Endothelial cell of umbilical vein (primary cell): ENCODE measurements at regions of chr9 and their contacts with region 1.

Region 1: GRCh38 chr9:113501129-113501686 is 37.7 kb downstream of the RGS3 start:
- DNase-seq: peak; percentile 98
- H3K4me3 ChIP-seq: peak overlapping the region; percentile 94 to 99 (median 94)
- H3K27ac ChIP-seq: peak overlapping the region; percentile 100
- H3K4me1 ChIP-seq: peaks cover 34% of the 10 kb centered on the region
- H3K27me3 ChIP-seq: no peaks in the 10 kb centered on the region
- CTCF ChIP-seq: peak in 1 of 2 donors; percentile 22
- POLR2A ChIP-seq: peak; percentile 88

Region 2: DNA sequence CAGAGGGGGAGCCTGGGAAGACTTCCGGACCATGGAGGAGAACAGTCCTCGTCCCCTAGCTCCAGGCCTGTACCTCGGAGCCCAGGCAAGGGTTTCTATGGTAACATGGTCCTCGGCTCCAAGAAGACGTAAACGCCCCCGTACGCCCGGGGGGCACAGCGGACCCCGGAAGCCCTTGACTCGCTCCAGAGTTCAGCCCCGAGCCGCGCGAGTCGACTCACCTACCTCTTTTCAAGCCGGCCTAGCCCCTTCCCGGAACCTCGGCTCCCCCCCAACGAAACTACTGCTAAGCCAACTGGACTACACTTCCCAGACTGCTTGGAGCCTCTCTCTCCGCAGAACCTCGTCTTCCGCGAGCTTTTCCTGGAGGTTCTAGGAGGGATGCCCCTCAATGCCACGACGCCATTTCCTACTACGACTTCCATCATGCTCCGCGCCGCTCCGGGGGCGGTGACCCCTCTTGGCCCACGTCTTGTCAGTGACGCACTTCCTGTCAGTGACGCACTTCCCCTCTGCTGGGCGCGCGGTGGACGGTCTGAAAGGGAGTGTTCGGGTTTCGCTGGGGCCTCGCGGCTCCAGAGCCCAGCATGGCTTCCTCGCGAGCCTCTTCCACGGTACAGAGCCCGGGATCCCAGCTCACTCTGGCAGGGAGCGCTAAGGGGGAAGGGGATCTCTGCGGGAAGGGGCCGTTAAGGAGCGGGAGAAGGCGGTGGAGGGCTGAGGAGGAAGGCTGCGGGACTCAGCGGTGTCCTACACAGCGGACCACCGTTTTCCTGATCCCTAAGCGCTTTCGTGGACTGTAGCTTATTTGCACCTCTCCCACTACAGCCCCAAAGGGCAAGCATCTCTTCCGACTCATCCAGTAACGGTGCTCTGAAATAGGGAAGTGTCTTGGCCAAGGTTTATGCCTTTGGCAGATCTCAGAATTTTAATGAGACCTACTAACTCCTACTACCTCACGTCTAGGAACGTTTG is 225.8 kb before region 1 on chr9 and contains the starts of genes CDC26 and PRPF4:
- CTCF ChIA-PET with region 1: no interaction called
- POLR2A ChIA-PET with region 1: no interaction called
- dilution Hi-C with region 1: no loop called
- intact Hi-C with region 1: loop called (anchors 1 kb)
- DNase-seq: peak; percentile 99
- H3K4me3 ChIP-seq: peak within 1 kb of the TSS; percentile 55 to 81 (median 74)
- H3K27ac ChIP-seq: peak within 1 kb of the TSS; percentile 94
- H3K4me1 ChIP-seq: peaks cover 13% of the 10 kb centered on the region
- H3K27me3 ChIP-seq: no peaks in the 10 kb centered on the region
- CTCF ChIP-seq: no peak
- POLR2A ChIP-seq: peak; percentile 94
- total RNA-seq, gene CDC26: 36.9 and 37.5 TPM in 2 replicates
- total RNA-seq, gene PRPF4: 24.2 and 25.8 TPM in 2 replicates

Region 3: GRCh38 chr9:113410207-113410864 is 90.9 kb before region 1 on chr9 and contains the starts of genes C9orf43 and POLE3:
- CTCF ChIA-PET with region 1: interaction called, 3 read pairs
- POLR2A ChIA-PET with region 1: interaction called, 3 read pairs
- dilution Hi-C with region 1: no loop called
- intact Hi-C with region 1: loop called (anchors 1 kb)
- DNase-seq: peak; percentile 97
- H3K4me3 ChIP-seq: peak within 1 kb of the TSS; percentile 86 to 98 (median 92)
- H3K27ac ChIP-seq: peak within 1 kb of the TSS; percentile 84
- H3K4me1 ChIP-seq: peaks cover 9% of the 10 kb centered on the region
- H3K27me3 ChIP-seq: no peaks in the 10 kb centered on the region
- CTCF ChIP-seq: no peak
- POLR2A ChIP-seq: peak; percentile 72
- total RNA-seq, gene C9orf43: 0.66 and 0.88 TPM in 2 replicates
- total RNA-seq, gene POLE3: 53.8 and 54.3 TPM in 2 replicates

Region 4: GRCh38 chr9:113484258-113484730 is 16.9 kb before region 1 on chr9:
- CTCF ChIA-PET with region 1: interaction called, 40 read pairs
- POLR2A ChIA-PET with region 1: interaction called, 38 read pairs
- dilution Hi-C with region 1: no loop called
- intact Hi-C with region 1: loop called (anchors 1 kb)
- DNase-seq: peak; percentile 99
- H3K4me3 ChIP-seq: no peak overlapping the region
- H3K27ac ChIP-seq: peak overlapping the region; percentile 31
- H3K4me1 ChIP-seq: peaks cover 23% of the 10 kb centered on the region
- H3K27me3 ChIP-seq: no peaks in the 10 kb centered on the region
- CTCF ChIP-seq: no peak
- POLR2A ChIP-seq: peak; percentile 37

Region 5: GRCh38 chr9:113675475-113675941 is 174.3 kb after region 1 on chr9:
- CTCF ChIA-PET with region 1: no interaction called
- POLR2A ChIA-PET with region 1: no interaction called
- dilution Hi-C with region 1: no loop called
- intact Hi-C with region 1: loop called (anchors 5 kb)
- DNase-seq: peak; percentile 99
- H3K4me3 ChIP-seq: no peak overlapping the region
- H3K27ac ChIP-seq: peak overlapping the region; percentile 83
- H3K4me1 ChIP-seq: peaks cover 30% of the 10 kb centered on the region
- H3K27me3 ChIP-seq: no peaks in the 10 kb centered on the region
- CTCF ChIP-seq: no peak
- POLR2A ChIP-seq: peak; percentile 64